Breast epithelium (tissue), 4 donors: ENCODE measurements at regions of chr7 and their contacts with region 1.

Region 1: GRCh38 chr7:51619880-51620279 is 303.3 kb upstream of the COBL start:
- DNase-seq: no peak
- H3K4me3 ChIP-seq: no peak overlapping the region
- H3K27ac ChIP-seq: no peak overlapping the region
- H3K4me1 ChIP-seq: no peaks in the 10 kb centered on the region
- H3K27me3 ChIP-seq: no peaks in the 10 kb centered on the region
- CTCF ChIP-seq: no peak
- POLR2A ChIP-seq: no peak

Region 2: GRCh38 chr7:50409856-50410745 is 1209.8 kb before region 1 on chr7:
- intact Hi-C with region 1: loop called (anchors 5 kb)
- DNase-seq: no peak
- H3K4me3 ChIP-seq: no peak overlapping the region
- H3K27ac ChIP-seq: no peak overlapping the region
- H3K4me1 ChIP-seq: no peaks in the 10 kb centered on the region
- H3K27me3 ChIP-seq: peaks cover 0 to 5% of the 10 kb centered on the region in 2 donors
- CTCF ChIP-seq: no peak
- POLR2A ChIP-seq: no peak

Region 3: GRCh38 chr7:51593628-51594027 is 26.3 kb before region 1 on chr7:
- intact Hi-C with region 1: no loop called
- DNase-seq: no peak
- H3K4me3 ChIP-seq: no peak overlapping the region
- H3K27ac ChIP-seq: no peak overlapping the region
- H3K4me1 ChIP-seq: no peaks in the 10 kb centered on the region
- H3K27me3 ChIP-seq: no peaks in the 10 kb centered on the region
- CTCF ChIP-seq: no peak
- POLR2A ChIP-seq: no peak